ENCODE measurements at regions of chr22 and their contacts with region 1.

Region 1: GRCh38 chr22:19058713-19059451 is 63.3 kb downstream of the DGCR2 start:
- DNase-seq: peak; percentile 16
- CTCF ChIP-seq: no peak

Region 2: DNA sequence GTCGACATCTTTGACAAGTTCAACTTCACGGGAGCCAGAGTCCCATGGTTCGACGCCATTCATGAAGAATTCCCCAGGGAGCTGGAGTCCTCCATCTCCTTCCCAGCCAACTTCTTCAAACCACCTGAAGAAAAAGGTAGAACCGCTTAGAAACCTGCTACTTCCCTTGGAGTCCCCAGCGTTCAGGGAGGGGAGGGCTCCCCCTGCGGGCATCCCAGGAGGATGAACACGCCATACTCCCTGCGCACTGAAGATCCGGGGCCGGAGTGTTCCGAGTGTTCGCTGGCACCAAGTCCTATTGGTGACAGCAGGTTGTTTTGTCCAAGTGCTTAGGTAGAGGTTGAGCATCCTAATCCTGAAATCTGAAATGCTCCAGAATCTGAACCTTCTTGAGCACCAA is 71.1 kb before region 1 on chr22:
- in situ Hi-C with region 1: no loop called
- DNase-seq: peak; percentile 45
- CTCF ChIP-seq: no peak

Region 3: GRCh38 chr22:19109198-19110067 is 50.6 kb after region 1 on chr22:
- in situ Hi-C with region 1: loop called (anchors 10 kb)
- DNase-seq: peak; percentile 67
- CTCF ChIP-seq: no peak

Region 4: GRCh38 chr22:19473578-19473977 is 414.7 kb after region 1 on chr22:
- in situ Hi-C with region 1: no loop called
- DNase-seq: no peak
- CTCF ChIP-seq: no peak

Measured in GM13976 (cell line).